AG04450 (cell line): ENCODE measurements at regions of chr5 and their contacts with region 1.

Region 1: GRCh38 chr5:57316798-57317327 is 143.0 kb downstream of the GPBP1 start:
- DNase-seq: peak; percentile 99
- H3K4me3 ChIP-seq: peak overlapping the region; percentile 18
- H3K27ac ChIP-seq: peak overlapping the region; percentile 76
- H3K27me3 ChIP-seq: no peaks in the 10 kb centered on the region
- CTCF ChIP-seq: no peak

Region 2: DNA sequence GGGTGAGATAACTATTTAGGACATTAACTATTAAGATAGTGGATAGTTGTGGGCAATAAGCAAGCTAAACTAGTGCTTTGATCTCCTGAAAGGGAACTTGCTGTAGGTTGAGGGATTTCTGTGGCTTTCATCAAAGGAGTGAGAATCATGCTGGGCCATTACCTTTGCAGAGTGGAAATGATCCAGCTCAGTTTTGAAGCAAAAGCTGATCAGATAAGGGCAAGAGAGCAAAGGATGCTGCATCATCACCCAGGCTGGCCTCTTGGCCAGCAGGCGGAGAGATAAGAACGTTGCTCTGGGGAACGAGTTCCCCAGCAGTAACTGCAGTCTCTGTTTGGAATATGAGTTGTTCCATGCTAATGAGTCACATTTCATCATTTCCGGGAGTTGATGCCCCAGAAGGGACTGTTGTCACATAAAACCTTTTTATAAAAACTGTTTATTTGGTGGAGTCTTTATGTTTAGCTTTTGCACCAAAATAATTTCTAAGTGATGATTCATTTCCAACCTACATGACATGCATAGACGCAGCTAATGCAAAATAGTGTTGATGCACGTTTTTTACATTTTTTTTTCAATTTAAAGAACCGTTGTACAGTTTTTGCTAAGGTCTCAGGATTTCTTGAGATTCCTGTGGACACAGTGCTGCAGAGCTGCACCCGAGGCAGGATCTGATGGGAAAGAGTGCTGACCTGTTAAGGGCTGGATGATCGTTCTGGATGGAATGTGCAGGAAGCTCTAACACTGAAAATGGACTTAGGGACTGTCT is 66.4 kb after region 1 on chr5:
- CTCF ChIA-PET with region 1: interaction called, 3 read pairs
- POLR2A ChIA-PET with region 1: interaction called, 13 read pairs
- DNase-seq: peak; percentile 93
- H3K4me3 ChIP-seq: no peak overlapping the region
- H3K27ac ChIP-seq: peak overlapping the region; percentile 87
- H3K27me3 ChIP-seq: no peaks in the 10 kb centered on the region
- CTCF ChIP-seq: peak; percentile 68

Region 3: GRCh38 chr5:57411982-57412381 is 95.1 kb after region 1 on chr5:
- CTCF ChIA-PET with region 1: no interaction called
- POLR2A ChIA-PET with region 1: interaction called, 13 read pairs
- DNase-seq: no peak
- H3K4me3 ChIP-seq: no peak overlapping the region
- H3K27ac ChIP-seq: no peak overlapping the region
- H3K27me3 ChIP-seq: no peaks in the 10 kb centered on the region
- CTCF ChIP-seq: no peak

Region 4: GRCh38 chr5:57442080-57442839 is 125.4 kb after region 1 on chr5:
- CTCF ChIA-PET with region 1: no interaction called
- POLR2A ChIA-PET with region 1: interaction called, 17 read pairs
- DNase-seq: peak; percentile 84
- H3K4me3 ChIP-seq: no peak overlapping the region
- H3K27ac ChIP-seq: peak overlapping the region; percentile 97
- H3K27me3 ChIP-seq: no peaks in the 10 kb centered on the region
- CTCF ChIP-seq: no peak